Naive thymus-derived CD8-positive, alpha-beta T cell (primary cell): ENCODE measurements at regions of chr6 and their contacts with region 1.

Region 1: GRCh38 chr6:4786936-4787504 is 10.8 kb downstream of the CDYL start:
- DNase-seq: no peak
- ATAC-seq: no peak
- H3K4me3 Mint-ChIP-seq: peak overlapping the region in 6 of 10 donors; percentile 4 to 69 (median 42)
- H3K27ac Mint-ChIP-seq: peak overlapping the region in 3 of 10 donors; percentile 49 to 71 (median 68)
- H3K4me1 Mint-ChIP-seq: peaks cover 36 to 88% (median 86%) of the 10 kb centered on the region in 4 donors
- H3K27me3 Mint-ChIP-seq: no peaks in the 10 kb centered on the region

Region 2: GRCh38 chr6:4775584-4776494 is 11.2 kb before region 1 on chr6 and contains the start of gene CDYL:
- POLR2A ChIA-PET with region 1: interaction called, 10 read pairs
- DNase-seq: peak; percentile 80 to 92 (median 90)
- ATAC-seq: peak; percentile 69 to 73
- H3K4me3 Mint-ChIP-seq: peak within 1 kb of the TSS; percentile 88 to 98 (median 94)
- H3K27ac Mint-ChIP-seq: peak within 1 kb of the TSS; percentile 70 to 96 (median 91)
- H3K4me1 Mint-ChIP-seq: peaks cover 29 to 48% (median 45%) of the 10 kb centered on the region in 4 donors
- H3K27me3 Mint-ChIP-seq: no peaks in the 10 kb centered on the region
- polyA plus RNA-seq, gene CDYL: 5.6 to 6.1 (median 5.7) TPM

Region 3: GRCh38 chr6:5246141-5247097 is 459.4 kb after region 1 on chr6:
- POLR2A ChIA-PET with region 1: no interaction called
- DNase-seq: no peak
- ATAC-seq: no peak
- H3K4me3 Mint-ChIP-seq: no peak overlapping the region
- H3K27ac Mint-ChIP-seq: peak overlapping the region in 2 of 10 donors; percentile 29 to 43
- H3K4me1 Mint-ChIP-seq: peaks cover 0 to 40% (median 15%) of the 10 kb centered on the region in 4 donors
- H3K27me3 Mint-ChIP-seq: no peaks in the 10 kb centered on the region